ENCODE measurements at regions of chr19 and their contacts with region 1.

Region 1: DNA sequence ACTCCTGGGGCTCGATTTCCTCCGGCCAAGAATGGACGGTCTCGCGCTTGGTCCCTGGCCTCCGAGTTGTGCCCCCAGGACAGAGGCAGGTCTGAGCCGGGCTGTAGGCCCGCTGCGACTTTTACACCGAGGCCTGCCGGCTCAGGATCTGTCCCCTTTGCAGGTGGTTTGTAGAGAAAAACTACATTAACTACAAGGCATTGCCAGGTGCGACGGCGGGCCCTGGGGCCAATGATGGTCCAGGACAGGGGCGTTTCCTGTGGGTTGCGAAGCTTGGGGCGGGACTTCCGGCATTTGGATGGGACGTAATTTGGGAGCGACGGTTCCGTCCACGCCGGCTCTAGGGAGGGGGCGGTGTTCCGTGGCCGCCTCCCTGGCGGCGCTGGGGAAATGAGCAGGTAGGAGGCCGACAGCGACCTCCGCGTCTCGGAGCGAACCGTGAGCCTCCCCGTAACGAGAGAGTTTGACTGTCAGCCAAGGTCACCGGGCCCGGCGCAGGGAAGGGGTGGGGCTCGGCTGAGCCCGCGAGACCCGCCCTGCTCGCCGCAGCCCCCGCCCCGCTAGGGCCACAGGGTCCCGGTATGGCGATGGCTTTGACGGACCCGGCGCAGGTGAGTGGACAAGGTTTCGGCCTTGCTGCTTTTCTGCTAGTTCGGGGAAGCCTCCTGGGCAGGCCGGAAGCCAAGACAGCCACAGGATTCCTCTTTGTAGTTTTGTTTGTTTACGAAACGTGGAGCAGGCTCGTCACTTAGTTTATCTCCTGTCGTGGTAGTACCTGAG is at the start of gene ZNF805:
- DNase-seq: peak; percentile 93
- H3K4me3 Mint-ChIP-seq: peak within 1 kb of the TSS; percentile 92
- H3K27ac Mint-ChIP-seq: peak within 1 kb of the TSS; percentile 97
- H3K4me1 Mint-ChIP-seq: peaks cover 14% of the 10 kb centered on the region
- H3K27me3 Mint-ChIP-seq: no peaks in the 10 kb centered on the region
- total RNA-seq, gene ZNF805: 6.9 and 8.4 TPM in 2 replicates

Region 2: GRCh38 chr19:57152921-57153320 is 87.6 kb before region 1 on chr19:
- intact Hi-C with region 1: no loop called
- DNase-seq: no peak
- H3K4me3 Mint-ChIP-seq: no peak overlapping the region
- H3K27ac Mint-ChIP-seq: no peak overlapping the region
- H3K4me1 Mint-ChIP-seq: no peaks in the 10 kb centered on the region
- H3K27me3 Mint-ChIP-seq: no peaks in the 10 kb centered on the region

Region 3: GRCh38 chr19:57191141-57192076 is 49.1 kb before region 1 on chr19 and contains the start of gene ZNF264:
- intact Hi-C with region 1: loop called (anchors 1 kb)
- DNase-seq: peak; percentile 86
- H3K4me3 Mint-ChIP-seq: peak within 1 kb of the TSS; percentile 94
- H3K27ac Mint-ChIP-seq: peak within 1 kb of the TSS; percentile 85
- H3K4me1 Mint-ChIP-seq: peaks cover 24% of the 10 kb centered on the region
- H3K27me3 Mint-ChIP-seq: no peaks in the 10 kb centered on the region
- total RNA-seq, gene ZNF264: 16.1 and 18.3 TPM in 2 replicates

Region 4: GRCh38 chr19:57279418-57280066 is 39.0 kb after region 1 on chr19:
- intact Hi-C with region 1: loop called (anchors 1 kb)
- DNase-seq: peak; percentile 75
- H3K4me3 Mint-ChIP-seq: no peak overlapping the region
- H3K27ac Mint-ChIP-seq: no peak overlapping the region
- H3K4me1 Mint-ChIP-seq: peaks cover 23% of the 10 kb centered on the region
- H3K27me3 Mint-ChIP-seq: peaks cover 2% of the 10 kb centered on the region

Region 5: DNA sequence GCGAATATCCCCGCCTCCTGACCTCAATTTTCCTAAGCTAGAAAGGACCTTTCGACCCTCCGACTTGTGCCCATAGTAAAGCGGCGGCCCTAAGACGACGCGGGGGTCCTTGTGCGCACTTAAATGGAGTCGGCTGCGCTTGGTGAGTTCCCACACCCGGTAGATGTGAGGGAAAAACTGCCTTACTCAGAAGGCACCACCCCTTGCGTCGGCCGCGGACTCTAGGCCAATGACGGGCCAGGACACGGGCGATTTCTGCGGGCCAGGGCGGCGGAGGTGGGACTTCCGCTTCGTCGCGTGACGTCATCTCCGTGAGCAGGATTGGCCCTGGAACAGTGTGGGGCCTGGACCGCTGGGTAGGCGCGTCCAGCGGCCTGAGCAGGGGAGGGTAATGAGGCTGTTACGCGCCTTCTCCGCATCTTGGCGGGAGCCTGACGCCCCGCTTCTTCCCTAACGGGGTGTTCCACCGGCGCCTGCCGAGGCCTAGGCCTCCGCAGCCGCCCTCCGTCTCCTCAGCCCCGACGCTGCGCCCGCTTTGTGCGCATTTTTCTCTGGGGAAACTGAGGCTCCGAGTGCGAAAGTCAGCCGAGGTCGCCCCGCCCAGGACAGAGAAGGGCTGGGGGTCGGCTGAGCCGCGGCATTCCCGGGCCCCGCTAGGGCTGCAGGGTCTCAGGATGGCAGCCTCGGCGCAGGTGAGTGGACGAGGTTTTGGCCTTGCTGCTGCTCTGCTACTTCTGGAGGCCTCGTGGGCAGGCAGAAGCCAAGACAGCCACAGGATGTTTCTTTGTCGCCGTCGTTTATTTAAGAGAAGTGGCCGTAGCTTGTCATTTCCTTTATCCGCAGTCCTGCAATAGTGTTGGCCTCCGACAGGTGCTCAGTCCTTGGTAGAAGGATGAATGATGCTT is 79.9 kb after region 1 on chr19 and contains the start of gene ZNF543:
- intact Hi-C with region 1: loop called (anchors 1 kb)
- DNase-seq: peak; percentile 90
- H3K4me3 Mint-ChIP-seq: peak within 1 kb of the TSS; percentile 89
- H3K27ac Mint-ChIP-seq: peak within 1 kb of the TSS; percentile 97
- H3K4me1 Mint-ChIP-seq: peaks cover 28% of the 10 kb centered on the region
- H3K27me3 Mint-ChIP-seq: peaks cover 14% of the 10 kb centered on the region
- total RNA-seq, gene ZNF543: 5.1 and 5.4 TPM in 2 replicates

Region 6: GRCh38 chr19:57350877-57351805 is 110.6 kb after region 1 on chr19 and contains the start of gene ZNF304:
- intact Hi-C with region 1: loop called (anchors 1 kb)
- DNase-seq: peak; percentile 84
- H3K4me3 Mint-ChIP-seq: peak within 1 kb of the TSS; percentile 92
- H3K27ac Mint-ChIP-seq: peak within 1 kb of the TSS; percentile 90
- H3K4me1 Mint-ChIP-seq: peaks cover 29% of the 10 kb centered on the region
- H3K27me3 Mint-ChIP-seq: no peaks in the 10 kb centered on the region
- total RNA-seq, gene ZNF304: 6.1 and 6.6 TPM in 2 replicates

Region 7: DNA sequence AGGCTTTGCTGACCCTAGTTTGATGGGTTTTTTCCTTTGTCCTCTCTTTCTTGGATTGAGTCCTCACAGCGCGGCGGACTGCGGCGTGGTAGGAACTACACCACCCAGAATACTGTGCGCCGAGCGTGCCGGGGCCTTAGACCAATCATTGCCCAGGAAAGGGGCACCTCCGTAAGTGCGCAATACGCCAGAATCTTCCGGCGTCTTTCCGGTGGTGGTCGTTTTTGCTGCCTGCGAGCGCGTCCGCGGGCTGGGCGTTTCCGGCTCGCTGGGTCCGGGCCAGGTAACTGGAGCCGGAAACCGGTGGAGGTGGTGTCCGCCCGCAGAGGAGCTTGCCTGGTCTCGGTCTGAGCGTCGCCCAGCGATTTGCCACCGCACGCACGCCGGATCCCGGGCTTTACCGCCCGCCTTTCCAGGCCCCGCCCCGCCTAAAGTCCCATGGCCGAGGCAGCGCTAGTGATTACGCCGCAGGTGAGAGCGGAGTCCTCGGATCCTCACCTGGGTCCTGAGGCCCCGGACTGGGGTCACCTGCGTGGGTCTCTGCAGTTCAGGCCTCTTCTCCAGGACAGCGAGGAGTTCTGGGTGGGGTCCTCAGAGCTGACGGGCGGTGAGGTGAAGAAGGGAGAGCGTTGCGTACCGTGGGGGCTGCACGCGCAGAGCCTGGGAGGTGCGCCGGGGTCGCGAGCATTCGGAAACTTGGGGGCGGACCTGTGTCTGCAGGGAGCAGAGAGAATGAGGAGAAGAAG is 286.8 kb after region 1 on chr19 and contains the start of gene ZNF549:
- intact Hi-C with region 1: loop called (anchors 1 kb)
- DNase-seq: peak; percentile 85
- H3K4me3 Mint-ChIP-seq: peak within 1 kb of the TSS; percentile 93
- H3K27ac Mint-ChIP-seq: peak within 1 kb of the TSS; percentile 76
- H3K4me1 Mint-ChIP-seq: peaks cover 20% of the 10 kb centered on the region
- H3K27me3 Mint-ChIP-seq: peaks cover 2% of the 10 kb centered on the region
- total RNA-seq, gene ZNF549: 3.6 and 4.2 TPM in 2 replicates

Region 8: DNA sequence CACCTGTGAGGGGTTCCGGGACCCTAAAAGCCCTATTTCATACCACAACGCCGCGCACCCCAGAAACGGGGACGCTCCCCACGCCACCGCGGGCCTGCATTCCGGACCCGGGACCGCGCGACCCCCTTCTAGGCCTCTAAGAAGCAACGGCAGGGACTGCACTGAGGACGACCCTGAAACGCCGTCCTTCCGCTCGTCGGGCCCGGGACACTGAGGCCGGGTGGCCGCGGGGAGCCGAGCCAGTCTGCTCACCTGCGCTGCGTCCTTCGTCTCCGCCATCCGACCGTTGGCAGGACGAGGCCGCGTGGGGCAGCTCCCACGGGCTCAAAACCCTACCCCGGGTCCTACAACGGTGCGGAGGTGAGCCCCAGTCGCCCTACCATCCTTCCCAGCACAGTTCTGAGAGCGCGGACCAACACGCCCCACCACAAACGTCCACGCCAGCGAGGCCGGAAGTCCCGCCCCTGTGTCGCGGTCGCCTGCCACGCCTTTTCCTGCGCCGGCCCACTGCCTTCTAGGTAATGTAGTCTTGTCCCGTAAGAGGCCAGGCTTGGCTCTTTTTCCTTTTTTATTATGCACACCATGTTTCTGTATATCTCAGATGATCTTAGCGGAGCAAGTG is 319.0 kb after region 1 on chr19 and contains the start of gene ZNF550:
- intact Hi-C with region 1: loop called (anchors 1 kb)
- DNase-seq: peak; percentile 84
- H3K4me3 Mint-ChIP-seq: peak within 1 kb of the TSS; percentile 98
- H3K27ac Mint-ChIP-seq: peak within 1 kb of the TSS; percentile 88
- H3K4me1 Mint-ChIP-seq: peaks cover 28% of the 10 kb centered on the region
- H3K27me3 Mint-ChIP-seq: no peaks in the 10 kb centered on the region
- total RNA-seq, gene ZNF550: 7.2 and 7.5 TPM in 2 replicates